Esophagus squamous epithelium (tissue), 5 donors: ENCODE measurements at regions of chr4 and their contacts with region 1.

Region 1: DNA sequence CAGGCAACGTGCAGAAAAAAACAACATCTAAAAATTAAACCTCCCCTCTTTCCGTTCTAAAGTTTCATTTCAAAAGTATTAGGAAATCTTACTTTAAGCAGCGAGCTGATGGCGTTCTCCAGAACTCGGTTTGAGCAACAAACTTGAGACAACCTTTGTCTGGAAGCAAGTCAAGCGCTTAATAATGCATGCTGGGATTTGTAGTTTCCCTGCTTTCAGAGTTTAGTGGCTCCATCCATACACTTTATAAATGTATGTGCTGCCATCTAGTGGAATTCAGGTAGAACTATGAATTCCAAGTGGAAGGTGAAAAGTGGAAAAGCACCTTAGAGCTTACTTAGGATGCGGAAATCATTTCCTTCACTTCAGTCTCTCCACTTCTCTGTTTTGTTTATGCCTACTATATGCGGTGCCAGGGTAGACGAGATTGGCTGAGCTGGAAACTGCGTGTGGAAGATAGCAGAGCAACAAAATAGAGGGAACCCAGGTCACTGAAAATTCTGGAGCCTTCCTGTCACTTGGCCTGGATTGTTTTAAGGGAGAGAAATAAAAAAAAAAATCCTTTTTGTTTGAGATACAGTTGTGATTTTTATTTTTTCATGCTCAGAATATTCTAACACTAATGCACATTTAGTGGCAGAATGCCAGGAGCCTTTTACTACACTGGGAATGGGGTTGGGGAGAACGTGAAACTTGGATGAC is at the start of gene BDH2:
- DNase-seq: no peak
- H3K4me3 ChIP-seq: peak within 1 kb of the TSS; percentile 28 to 67 (median 48)
- H3K27ac ChIP-seq: peak within 1 kb of the TSS; percentile 62 to 82 (median 78)
- H3K4me1 ChIP-seq: peaks cover 4 to 37% (median 9%) of the 10 kb centered on the region in 3 donors
- H3K27me3 ChIP-seq: no peaks in the 10 kb centered on the region
- CTCF ChIP-seq: peak; percentile 76 to 90 (median 84)
- POLR2A ChIP-seq: peak in 2 of 4 donors; percentile 10 to 31
- total RNA-seq, gene BDH2: 16.4 to 47.1 (median 32.2) TPM

Region 2: DNA sequence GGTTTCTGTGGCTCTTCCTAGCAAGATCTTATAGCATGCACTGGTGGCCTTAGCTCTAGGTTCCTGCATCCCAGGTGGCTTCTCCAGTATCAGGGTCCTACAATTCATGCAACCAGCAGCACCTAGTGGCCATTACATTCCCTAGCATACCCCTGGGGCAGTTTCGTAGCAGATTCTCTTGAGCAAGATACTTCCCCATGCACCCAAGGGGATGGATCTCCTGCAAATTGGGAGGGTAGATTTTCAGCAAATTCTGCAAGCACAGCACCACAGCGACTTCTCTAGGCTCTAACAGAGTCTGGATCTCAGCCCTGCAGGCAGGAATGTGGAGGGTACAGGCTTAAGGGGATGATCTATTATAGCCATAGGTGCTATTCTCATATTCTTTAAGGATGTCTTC is 67.3 kb before region 1 on chr4:
- intact Hi-C with region 1: loop called (anchors 10 kb)
- DNase-seq: no peak
- H3K4me3 ChIP-seq: no peak overlapping the region
- H3K27ac ChIP-seq: no peak overlapping the region
- H3K4me1 ChIP-seq: no peaks in the 10 kb centered on the region
- H3K27me3 ChIP-seq: no peaks in the 10 kb centered on the region
- CTCF ChIP-seq: peak in 2 of 6 experiments; percentile 11 to 29
- POLR2A ChIP-seq: no peak